ENCODE measurements at regions of chr13 and their contacts with region 1.

Region 1: GRCh38 chr13:104571161-104571892 is 1505.1 kb upstream of the SLC10A2 start:
- DNase-seq: peak; percentile 89
- H3K4me3 ChIP-seq: no peak overlapping the region
- H3K27ac ChIP-seq: peak overlapping the region; percentile 4
- H3K4me1 ChIP-seq: no peaks in the 10 kb centered on the region
- H3K27me3 ChIP-seq: no peaks in the 10 kb centered on the region
- CTCF ChIP-seq: peak; percentile 73 to 76
- POLR2A ChIP-seq: no peak

Region 2: DNA sequence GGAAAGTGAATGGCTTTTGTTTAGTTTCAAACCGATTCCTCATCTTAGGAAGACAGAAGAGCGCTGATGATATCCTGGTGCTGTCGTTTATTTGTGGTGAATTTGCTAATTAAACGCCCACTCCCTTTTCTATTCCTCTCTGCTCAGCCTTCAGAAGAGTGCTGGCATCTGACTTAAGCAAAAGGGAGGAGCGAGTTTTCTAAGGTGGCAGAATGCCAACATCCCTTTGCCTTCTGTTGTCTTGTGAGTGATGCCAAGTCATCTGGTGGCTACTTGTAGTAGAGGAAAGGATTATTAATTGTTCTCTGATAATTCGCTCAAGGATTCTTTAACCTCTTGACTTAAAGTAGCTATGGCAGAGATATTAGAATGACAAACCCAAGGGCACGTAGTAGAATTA is 1657.4 kb before region 1 on chr13:
- CTCF ChIA-PET with region 1: no interaction called
- POLR2A ChIA-PET with region 1: no interaction called
- dilution Hi-C with region 1: no loop called
- intact Hi-C with region 1: loop called (anchors 10 kb)
- DNase-seq: peak; percentile 73
- H3K4me3 ChIP-seq: no peak overlapping the region
- H3K27ac ChIP-seq: no peak overlapping the region
- H3K4me1 ChIP-seq: no peaks in the 10 kb centered on the region
- H3K27me3 ChIP-seq: peaks cover 5% of the 10 kb centered on the region in 2 experiments
- CTCF ChIP-seq: no peak
- POLR2A ChIP-seq: no peak

Region 3: DNA sequence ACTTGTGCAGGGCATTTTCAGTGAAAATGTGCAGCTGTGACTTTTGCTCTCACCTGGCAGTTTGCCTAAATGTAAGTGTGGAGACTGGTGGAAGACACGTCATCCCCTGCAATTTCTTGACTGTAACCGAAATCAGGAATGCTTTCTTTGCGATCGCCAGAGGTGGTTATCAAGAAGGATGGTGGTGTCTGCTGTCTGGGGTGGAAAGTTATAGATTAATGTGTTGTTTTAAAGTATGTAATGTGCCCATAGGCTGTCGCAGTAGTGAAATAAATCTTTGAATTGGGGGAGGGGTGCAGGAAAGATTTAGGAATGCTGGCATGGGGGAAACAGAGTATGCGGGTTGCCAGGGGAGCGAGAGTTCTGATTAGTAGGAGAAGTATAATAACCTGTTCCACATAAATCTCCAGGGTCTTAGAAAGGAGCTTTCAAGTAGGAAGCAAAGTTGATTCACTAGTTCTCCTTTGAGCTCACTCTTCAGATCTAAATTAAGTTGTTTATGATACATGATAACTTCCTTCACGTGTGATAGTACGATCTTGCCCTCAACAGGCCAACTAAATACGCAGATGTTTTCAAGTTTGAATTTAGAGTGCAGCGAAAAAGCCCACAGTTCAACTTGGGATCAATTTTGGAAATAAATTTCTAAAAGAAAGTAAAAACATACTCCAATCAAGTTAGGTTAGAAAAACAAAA is 14.9 kb after region 1 on chr13:
- CTCF ChIA-PET with region 1: interaction called, 25 read pairs
- POLR2A ChIA-PET with region 1: no interaction called
- dilution Hi-C with region 1: no loop called
- intact Hi-C with region 1: no loop called
- DNase-seq: peak; percentile 39
- H3K4me3 ChIP-seq: no peak overlapping the region
- H3K27ac ChIP-seq: no peak overlapping the region
- H3K4me1 ChIP-seq: no peaks in the 10 kb centered on the region
- H3K27me3 ChIP-seq: no peaks in the 10 kb centered on the region
- CTCF ChIP-seq: no peak
- POLR2A ChIP-seq: no peak

Region 4: DNA sequence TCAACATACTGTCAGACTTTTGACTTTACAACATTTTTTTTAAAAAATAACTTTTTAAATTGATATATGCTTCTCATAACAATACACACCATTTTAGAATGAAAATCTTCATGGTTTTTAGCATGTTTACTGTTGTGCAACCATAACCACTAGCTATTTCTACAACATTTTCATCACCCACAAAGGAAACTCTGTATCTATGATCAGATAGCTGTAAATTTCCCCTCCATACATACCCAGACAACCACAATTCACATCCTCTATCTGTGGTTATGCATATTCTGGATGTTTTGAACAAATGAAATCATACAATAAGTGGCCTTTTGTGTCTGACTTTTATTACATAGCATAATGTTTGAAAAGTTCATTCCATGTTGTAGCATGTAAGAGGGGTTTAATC is 298.2 kb after region 1 on chr13:
- CTCF ChIA-PET with region 1: no interaction called
- POLR2A ChIA-PET with region 1: no interaction called
- dilution Hi-C with region 1: no loop called
- intact Hi-C with region 1: no loop called
- DNase-seq: no peak
- H3K4me3 ChIP-seq: no peak overlapping the region
- H3K27ac ChIP-seq: no peak overlapping the region
- H3K4me1 ChIP-seq: no peaks in the 10 kb centered on the region
- H3K27me3 ChIP-seq: no peaks in the 10 kb centered on the region
- CTCF ChIP-seq: no peak
- POLR2A ChIP-seq: no peak

Region 5: DNA sequence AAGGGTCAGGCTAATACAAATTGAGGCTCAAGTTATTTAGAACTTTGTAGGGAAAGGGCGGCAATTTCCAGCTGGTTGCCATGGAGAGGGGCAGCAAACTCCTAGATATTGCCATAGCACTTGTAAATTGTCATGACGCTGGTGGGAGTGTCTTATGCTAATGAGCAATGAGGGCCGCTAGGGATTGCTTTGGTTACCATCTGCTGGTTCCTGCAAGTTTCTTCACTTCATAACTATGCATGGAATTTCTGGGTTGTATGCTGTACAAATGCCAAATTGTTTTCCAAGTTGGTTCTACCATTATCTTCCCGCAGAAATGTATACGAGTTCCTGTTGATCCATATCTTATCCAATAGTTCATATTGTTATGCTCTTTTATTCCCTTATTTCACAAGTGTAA is 624.7 kb after region 1 on chr13:
- CTCF ChIA-PET with region 1: no interaction called
- POLR2A ChIA-PET with region 1: no interaction called
- dilution Hi-C with region 1: no loop called
- intact Hi-C with region 1: loop called (anchors 5 kb)
- DNase-seq: peak; percentile 88
- H3K4me3 ChIP-seq: no peak overlapping the region
- H3K27ac ChIP-seq: peak overlapping the region; percentile 69
- H3K4me1 ChIP-seq: peaks cover 9% of the 10 kb centered on the region
- H3K27me3 ChIP-seq: no peaks in the 10 kb centered on the region
- CTCF ChIP-seq: no peak
- POLR2A ChIP-seq: no peak

Region 6: DNA sequence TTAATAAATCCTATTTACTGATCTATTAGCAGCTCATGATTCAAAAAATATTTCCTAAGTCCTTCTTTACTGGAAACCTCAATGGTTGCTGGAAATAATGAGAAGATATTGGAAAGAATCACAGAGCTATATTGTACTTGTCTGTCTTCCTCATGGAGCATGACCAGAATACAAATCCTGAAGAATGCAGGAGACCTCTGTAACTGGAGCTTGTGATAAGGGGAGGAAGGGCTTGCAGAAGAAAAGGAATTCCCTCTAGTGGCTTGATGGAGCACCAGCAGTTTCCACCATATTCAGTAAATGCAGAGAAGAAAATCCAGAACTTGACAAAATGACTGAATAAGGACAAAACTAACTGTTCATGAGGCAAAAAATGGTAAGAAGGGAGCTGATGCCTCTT is 631.0 kb after region 1 on chr13:
- CTCF ChIA-PET with region 1: interaction called, 27 read pairs
- POLR2A ChIA-PET with region 1: no interaction called
- dilution Hi-C with region 1: no loop called
- intact Hi-C with region 1: loop called (anchors 5 kb)
- DNase-seq: peak; percentile 69
- H3K4me3 ChIP-seq: no peak overlapping the region
- H3K27ac ChIP-seq: no peak overlapping the region
- H3K4me1 ChIP-seq: no peaks in the 10 kb centered on the region
- H3K27me3 ChIP-seq: no peaks in the 10 kb centered on the region
- CTCF ChIP-seq: peak; percentile 51 to 70
- POLR2A ChIP-seq: no peak

Measured in endothelial cell of umbilical vein (primary cell).